ENCODE measurements at regions of chr1 and their contacts with region 1.

Region 1: DNA sequence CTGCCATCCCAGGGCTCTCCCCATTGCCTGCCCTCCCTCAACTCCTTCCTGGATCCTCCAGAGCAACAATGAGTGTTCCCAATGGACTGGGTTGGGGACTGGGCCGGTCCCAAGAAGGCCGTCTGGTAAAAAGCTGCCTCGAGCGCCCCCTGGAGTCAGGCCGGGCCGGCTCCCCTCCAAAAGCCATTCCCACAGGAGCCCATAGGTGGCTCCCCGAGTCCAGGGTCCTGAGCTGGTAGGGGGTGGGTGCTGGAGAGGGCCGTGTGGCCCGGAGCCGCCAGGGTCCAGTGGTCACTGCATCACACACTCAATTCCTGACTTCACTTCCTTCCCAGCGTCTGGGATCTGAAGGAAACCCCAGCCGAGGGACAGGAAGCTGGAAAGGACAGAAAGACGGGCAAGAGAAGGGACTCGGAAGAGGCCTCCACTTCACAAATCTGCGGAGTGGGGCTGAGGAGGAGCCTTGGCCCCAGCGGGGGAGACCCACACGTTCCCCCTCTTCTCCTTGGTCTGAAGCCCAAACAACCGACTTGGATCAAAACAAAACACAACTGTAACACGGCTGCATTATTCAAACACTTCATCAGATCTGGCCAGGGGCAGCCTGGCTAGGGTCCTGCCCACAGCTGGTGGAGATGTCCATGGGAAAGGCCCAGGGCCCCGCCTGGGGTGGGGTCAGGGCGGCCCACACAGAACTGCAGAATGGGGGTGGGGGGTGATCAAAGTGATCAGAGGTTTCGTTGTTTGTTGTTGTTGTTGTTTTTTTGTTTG is 10.9 kb upstream of the ALDH4A1 start:
- DNase-seq: no peak
- ATAC-seq: peak; percentile 98
- H3K4me3 ChIP-seq: no peak overlapping the region
- H3K27ac ChIP-seq: no peak overlapping the region
- H3K4me1 ChIP-seq: peaks cover 5% of the 10 kb centered on the region
- H3K27me3 ChIP-seq: no peaks in the 10 kb centered on the region
- CTCF ChIP-seq: peak; percentile 99 to 100 (median 99); a peak in 5 of 6 replicates
- EP300 ChIP-seq: no peak
- POLR2A ChIP-seq: no peak
- RAD21 ChIP-seq: peak; percentile 92

Region 2: GRCh38 chr1:18883636-18884418 is 29.4 kb before region 1 on chr1:
- CTCF ChIA-PET with region 1: interaction called, 23 read pairs
- POLR2A ChIA-PET with region 1: no interaction called
- RAD21 ChIA-PET with region 1: interaction called, 9 read pairs
- SMC1A ChIA-PET with region 1: interaction called, 3 read pairs
- in situ Hi-C with region 1: no loop called
- intact Hi-C with region 1: no loop called
- DNase-seq: no peak
- ATAC-seq: peak; percentile 96
- H3K4me3 ChIP-seq: no peak overlapping the region
- H3K27ac ChIP-seq: no peak overlapping the region
- H3K4me1 ChIP-seq: no peaks in the 10 kb centered on the region
- H3K27me3 ChIP-seq: no peaks in the 10 kb centered on the region
- CTCF ChIP-seq: peak; percentile 84 to 94 (median 94)
- EP300 ChIP-seq: no peak
- POLR2A ChIP-seq: no peak
- RAD21 ChIP-seq: peak; percentile 82

Region 3: DNA sequence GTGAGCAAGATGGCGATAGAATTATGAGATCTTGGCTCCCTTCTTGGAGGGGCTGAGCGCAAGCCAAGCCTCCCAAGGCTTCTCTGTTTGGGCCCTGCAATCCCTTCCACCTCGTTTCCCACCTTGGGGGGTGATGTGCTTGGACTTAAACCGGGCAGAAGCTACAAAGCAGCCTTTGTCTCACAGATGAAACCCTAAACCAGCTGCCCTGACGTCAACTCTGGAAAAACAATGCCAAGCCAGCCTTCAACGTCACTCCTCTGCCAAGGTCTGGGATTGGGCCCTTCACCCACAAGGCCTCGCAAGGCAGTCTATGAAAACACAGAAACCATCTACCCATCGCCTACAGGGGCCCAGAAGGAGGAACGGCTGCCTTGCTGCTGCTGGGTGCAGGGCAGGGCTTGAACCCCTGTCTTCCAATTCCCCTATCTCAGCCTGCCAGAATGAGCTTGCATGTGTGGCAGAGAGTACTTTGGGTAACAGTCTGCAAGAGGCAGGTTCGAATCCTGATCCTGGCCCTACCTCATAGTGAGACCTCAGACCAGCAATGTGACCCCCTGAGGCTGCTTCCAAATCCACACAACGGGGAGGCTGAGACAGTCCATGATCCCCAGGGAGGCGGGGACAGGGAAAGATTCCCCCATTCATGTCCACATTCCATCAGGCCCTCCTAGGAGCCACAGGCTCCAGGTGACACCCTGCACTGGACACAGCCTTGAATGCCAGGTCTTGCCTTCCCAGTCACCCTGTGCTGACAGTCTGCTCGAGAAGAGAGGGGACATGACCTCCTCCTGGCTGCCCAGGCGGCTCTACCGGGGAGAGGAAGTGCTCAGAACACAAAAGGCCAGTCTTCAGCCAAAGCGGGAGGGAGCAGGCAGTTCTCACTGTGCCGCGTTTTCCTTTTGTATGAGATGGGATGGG is 28.2 kb after region 1 on chr1:
- CTCF ChIA-PET with region 1: interaction called, 13 read pairs
- POLR2A ChIA-PET with region 1: no interaction called
- RAD21 ChIA-PET with region 1: no interaction called
- SMC1A ChIA-PET with region 1: interaction called, 6 read pairs
- in situ Hi-C with region 1: no loop called
- intact Hi-C with region 1: no loop called
- DNase-seq: no peak
- ATAC-seq: no peak
- H3K4me3 ChIP-seq: no peak overlapping the region
- H3K27ac ChIP-seq: no peak overlapping the region
- H3K4me1 ChIP-seq: peaks cover 18% of the 10 kb centered on the region
- H3K27me3 ChIP-seq: no peaks in the 10 kb centered on the region
- CTCF ChIP-seq: no peak
- EP300 ChIP-seq: no peak
- POLR2A ChIP-seq: no peak
- RAD21 ChIP-seq: no peak

Region 4: GRCh38 chr1:18965206-18966173 is 52.2 kb after region 1 on chr1:
- CTCF ChIA-PET with region 1: interaction called, 86 read pairs
- POLR2A ChIA-PET with region 1: no interaction called
- RAD21 ChIA-PET with region 1: interaction called, 8 read pairs
- SMC1A ChIA-PET with region 1: interaction called, 4 read pairs
- in situ Hi-C with region 1: no loop called
- intact Hi-C with region 1: no loop called
- DNase-seq: no peak
- ATAC-seq: peak; percentile 90
- H3K4me3 ChIP-seq: no peak overlapping the region
- H3K27ac ChIP-seq: no peak overlapping the region
- H3K4me1 ChIP-seq: peaks cover 7% of the 10 kb centered on the region; the same call in 1 of the 2 replicates
- H3K27me3 ChIP-seq: peaks cover under 1 to 1% of the 10 kb centered on the region in 2 experiments; a peak in 2 of 4 replicates
- CTCF ChIP-seq: peak in 1 of 3 experiments; percentile 43; a peak in 2 of 6 replicates
- EP300 ChIP-seq: no peak
- POLR2A ChIP-seq: no peak
- RAD21 ChIP-seq: peak; percentile 54

Region 5: GRCh38 chr1:19087737-19088594 is 174.7 kb after region 1 on chr1:
- CTCF ChIA-PET with region 1: interaction called, 22 read pairs
- POLR2A ChIA-PET with region 1: no interaction called
- RAD21 ChIA-PET with region 1: interaction called, 8 read pairs
- SMC1A ChIA-PET with region 1: interaction called, 6 read pairs
- in situ Hi-C with region 1: no loop called
- intact Hi-C with region 1: no loop called
- DNase-seq: peak; percentile 19
- ATAC-seq: peak; percentile 90
- H3K4me3 ChIP-seq: 0 out of 2 replicates have a peak overlapping the region, but pooled peaks have one; percentile 6
- H3K27ac ChIP-seq: peak overlapping the region; percentile 75
- H3K4me1 ChIP-seq: peaks cover 26% of the 10 kb centered on the region
- H3K27me3 ChIP-seq: no peaks in the 10 kb centered on the region
- CTCF ChIP-seq: no peak
- EP300 ChIP-seq: no peak
- POLR2A ChIP-seq: peak; percentile 60
- RAD21 ChIP-seq: no peak

Region 6: DNA sequence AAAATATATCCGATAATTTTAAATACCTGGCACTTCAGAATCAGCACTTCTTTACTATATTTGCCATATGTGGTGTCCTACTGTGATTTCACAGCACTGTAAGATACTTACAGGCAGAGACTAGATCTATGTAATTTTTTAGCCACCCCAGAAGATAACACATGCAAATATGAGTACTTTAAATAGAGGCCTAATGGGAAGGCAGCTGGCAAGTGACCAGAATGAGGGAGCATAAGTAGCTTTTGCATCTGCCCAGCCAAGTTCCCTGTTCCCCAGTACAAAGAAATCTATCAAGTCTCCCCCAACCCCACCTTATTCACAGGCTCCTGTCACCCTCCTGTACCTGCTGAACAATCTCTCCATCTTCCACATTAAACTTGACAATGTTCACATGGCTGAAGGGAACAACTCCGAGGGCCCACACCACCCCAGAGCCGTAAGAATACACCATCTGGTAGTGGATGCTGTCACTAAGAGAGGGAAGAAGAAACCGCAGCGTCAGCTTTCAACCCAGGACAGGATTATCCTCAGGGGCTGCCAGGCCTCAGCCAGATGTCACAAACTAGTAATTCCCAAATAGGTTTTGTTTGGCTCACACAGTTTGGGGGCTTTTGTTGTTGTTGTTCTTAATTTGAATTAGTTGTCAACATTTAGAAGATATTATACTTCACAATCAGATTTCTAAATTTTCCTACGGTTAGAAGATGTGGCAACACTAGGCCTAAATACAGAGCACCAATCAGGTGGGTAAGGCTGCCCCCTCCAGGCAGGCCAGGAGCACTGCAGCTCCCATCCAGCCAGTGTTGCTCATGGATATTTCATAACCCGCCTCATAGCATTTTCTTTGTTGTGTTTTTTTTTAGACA is 327.7 kb after region 1 on chr1:
- CTCF ChIA-PET with region 1: interaction called, 20 read pairs
- POLR2A ChIA-PET with region 1: no interaction called
- RAD21 ChIA-PET with region 1: interaction called, 3 read pairs
- SMC1A ChIA-PET with region 1: interaction called, 3 read pairs
- in situ Hi-C with region 1: no loop called
- intact Hi-C with region 1: no loop called
- DNase-seq: no peak
- ATAC-seq: peak; percentile 97
- H3K4me3 ChIP-seq: no peak overlapping the region
- H3K27ac ChIP-seq: no peak overlapping the region
- H3K4me1 ChIP-seq: no peaks in the 10 kb centered on the region
- H3K27me3 ChIP-seq: no peaks in the 10 kb centered on the region
- CTCF ChIP-seq: peak; percentile 89 to 96 (median 94)
- EP300 ChIP-seq: no peak
- POLR2A ChIP-seq: no peak
- RAD21 ChIP-seq: peak; percentile 73

Measured in GM12878 (cell line).